Breast epithelium (tissue), 4 donors: ENCODE measurements at regions of chr17 and their contacts with region 1.

Region 1: DNA sequence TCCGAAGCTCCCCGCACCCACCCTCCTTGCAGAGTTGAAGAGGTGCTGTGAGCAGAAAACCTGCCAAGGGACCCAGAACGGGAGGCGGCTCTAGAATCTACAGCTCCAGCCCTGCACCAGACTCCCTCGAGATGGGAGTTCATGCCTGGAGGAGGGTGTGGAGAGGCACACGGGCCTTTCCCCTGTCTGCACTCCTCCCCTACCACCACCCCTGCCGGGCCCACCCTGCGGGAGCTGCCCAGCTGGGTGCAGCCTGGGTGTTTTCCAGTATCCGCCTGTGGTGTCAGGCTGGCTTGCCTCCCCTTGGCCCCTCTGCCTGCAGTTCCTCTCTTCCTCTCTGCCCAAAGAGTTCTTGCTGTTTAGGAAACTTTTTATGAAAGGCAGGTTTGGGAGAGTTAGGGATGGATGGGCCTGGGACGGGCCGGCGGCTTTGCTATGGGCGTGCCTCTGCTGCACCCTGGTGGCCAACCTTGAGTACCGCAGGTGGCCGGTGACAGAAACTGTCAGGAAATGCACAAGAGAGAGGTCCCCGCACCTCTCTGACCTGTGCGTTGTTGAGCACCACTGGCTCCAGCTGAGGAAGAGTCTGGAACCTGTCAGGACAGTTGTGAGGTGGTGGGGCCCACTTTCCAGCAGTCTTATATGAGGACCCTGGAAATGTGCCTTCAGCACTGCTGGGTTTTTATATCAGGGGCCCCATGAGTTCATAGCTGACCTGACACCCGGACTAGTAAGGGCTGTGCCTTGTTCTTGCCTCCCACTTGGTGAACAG is 354.1 kb downstream of the SEC14L1 start:
- DNase-seq: peak; percentile 63 to 83
- H3K4me3 ChIP-seq: no peak overlapping the region
- H3K27ac ChIP-seq: no peak overlapping the region
- H3K4me1 ChIP-seq: peaks cover 4% of the 10 kb centered on the region in 2 donors
- H3K27me3 ChIP-seq: no peaks in the 10 kb centered on the region
- CTCF ChIP-seq: peak; percentile 99 to 100 (median 100)
- POLR2A ChIP-seq: no peak

Region 2: GRCh38 chr17:77325577-77326075 is 169.2 kb before region 1 on chr17:
- intact Hi-C with region 1: loop called (anchors 5 kb)
- DNase-seq: peak in 1 of 2 donors; percentile 23
- H3K4me3 ChIP-seq: no peak overlapping the region
- H3K27ac ChIP-seq: peak overlapping the region; percentile 99 to 100
- H3K4me1 ChIP-seq: peaks cover 21 to 33% of the 10 kb centered on the region in 2 donors
- H3K27me3 ChIP-seq: no peaks in the 10 kb centered on the region
- CTCF ChIP-seq: no peak
- POLR2A ChIP-seq: no peak

Region 3: DNA sequence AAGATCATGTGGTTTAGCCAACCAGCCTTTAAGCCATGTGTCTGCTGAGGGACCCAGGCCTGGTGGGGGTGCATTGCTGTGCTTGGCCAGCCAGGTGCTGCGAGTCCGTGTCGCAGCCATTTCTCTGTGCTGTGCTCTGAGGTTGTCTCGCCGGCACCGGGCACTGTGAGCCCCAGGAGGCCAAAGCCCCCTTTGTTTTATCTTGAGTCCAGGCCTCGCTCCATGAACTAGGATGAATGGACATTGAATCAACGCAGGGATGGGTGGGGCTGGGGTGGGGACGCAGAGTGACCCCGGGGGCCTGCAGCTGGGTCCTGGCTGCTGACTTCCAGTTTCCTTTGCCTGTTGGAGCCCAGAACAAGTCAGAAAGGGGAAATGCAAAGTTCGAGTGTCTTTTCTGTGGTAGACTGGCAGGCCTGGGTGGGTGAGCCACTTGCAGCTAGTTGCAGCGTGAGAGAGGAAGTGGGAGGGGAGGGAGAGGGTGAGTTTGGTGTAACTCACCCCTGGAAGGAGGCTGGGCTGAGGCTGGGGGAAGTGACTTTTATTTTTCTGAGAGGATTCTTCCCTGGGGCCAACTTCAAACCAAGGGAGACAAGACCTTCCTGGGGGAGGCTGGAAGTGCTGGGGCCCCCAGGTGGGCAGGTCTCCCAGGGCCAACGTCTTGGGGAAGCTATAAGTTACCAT is 29.4 kb before region 1 on chr17:
- intact Hi-C with region 1: no loop called
- DNase-seq: no peak
- H3K4me3 ChIP-seq: peak overlapping the region in 1 of 3 donors; percentile 2
- H3K27ac ChIP-seq: peak overlapping the region in 1 of 2 donors; percentile 85
- H3K4me1 ChIP-seq: peaks cover 4 to 12% of the 10 kb centered on the region in 2 donors
- H3K27me3 ChIP-seq: no peaks in the 10 kb centered on the region
- CTCF ChIP-seq: no peak
- POLR2A ChIP-seq: no peak

Region 4: DNA sequence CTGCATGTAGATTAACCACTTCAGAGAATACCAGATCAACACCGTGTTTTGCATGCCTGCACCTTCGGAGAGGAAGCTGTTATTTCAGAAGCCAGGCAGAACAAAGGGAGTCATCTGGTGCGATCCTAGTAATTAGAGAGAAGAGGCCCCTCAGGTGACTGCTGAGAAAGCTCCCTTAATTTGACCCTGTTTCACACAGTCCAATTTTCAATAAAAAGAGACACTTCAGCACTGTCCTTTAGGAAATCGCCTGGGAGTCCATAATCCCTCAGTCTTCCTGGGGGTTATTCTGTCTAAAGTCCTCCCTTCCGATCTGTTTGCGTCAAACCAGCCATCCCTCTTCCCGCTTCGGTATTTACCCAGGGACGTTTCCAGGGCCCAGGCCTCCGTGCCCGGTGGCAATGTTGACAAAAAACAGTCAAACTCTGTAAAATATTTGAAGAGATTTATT is 440.3 kb after region 1 on chr17:
- intact Hi-C with region 1: no loop called
- DNase-seq: no peak
- H3K4me3 ChIP-seq: no peak overlapping the region
- H3K27ac ChIP-seq: peak overlapping the region in 1 of 2 donors; percentile 4
- H3K4me1 ChIP-seq: no peaks in the 10 kb centered on the region
- H3K27me3 ChIP-seq: peaks cover 0 to 12% of the 10 kb centered on the region in 2 donors
- CTCF ChIP-seq: no peak
- POLR2A ChIP-seq: no peak